AG04449 (cell line): ENCODE measurements at regions of chr2 and their contacts with region 1.

Region 1: DNA sequence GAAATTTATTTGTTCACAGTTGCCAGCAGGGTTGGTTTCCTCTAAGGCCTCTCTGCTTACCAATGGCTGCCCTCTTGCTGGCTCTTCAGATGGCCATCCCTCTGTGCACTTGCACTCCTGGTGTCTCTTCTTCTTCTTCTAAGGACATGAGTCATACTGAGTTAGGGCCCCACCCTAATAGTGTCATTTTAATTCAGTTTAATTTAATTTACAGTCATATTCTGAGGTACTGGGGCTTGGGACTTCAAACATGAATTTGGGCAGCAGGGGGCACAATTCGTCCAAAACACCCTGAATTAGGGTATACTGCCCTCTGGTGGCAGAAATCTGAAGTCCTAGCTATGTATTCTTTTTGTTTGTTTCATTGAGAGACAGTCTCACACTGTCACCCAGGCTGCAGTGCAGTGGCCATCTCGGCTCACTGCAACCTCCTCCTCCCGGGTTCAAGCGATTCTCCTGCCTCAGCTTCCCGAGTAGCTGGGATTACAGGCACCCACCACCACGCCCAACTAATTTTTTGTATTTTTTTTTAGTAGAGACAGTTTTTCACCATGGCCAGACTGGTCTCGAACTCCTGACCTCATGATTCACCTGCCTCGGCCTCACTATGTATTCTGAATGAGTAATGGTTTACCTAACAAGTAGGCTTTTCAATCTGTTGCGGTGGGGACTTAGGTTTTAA is 19.8 kb downstream of the SLC4A1AP start:
- DNase-seq: peak; percentile 36
- H3K4me3 ChIP-seq: no peak overlapping the region
- CTCF ChIP-seq: peak; percentile 71

Region 2: GRCh38 chr2:27370026-27370815 is 313.3 kb before region 1 on chr2 and contains the starts of genes EIF2B4 and SNX17:
- CTCF ChIA-PET with region 1: interaction called, 16 read pairs
- POLR2A ChIA-PET with region 1: no interaction called
- DNase-seq: peak; percentile 96
- H3K4me3 ChIP-seq: peak within 1 kb of the TSS; percentile 97
- CTCF ChIP-seq: peak; percentile 91

Region 3: DNA sequence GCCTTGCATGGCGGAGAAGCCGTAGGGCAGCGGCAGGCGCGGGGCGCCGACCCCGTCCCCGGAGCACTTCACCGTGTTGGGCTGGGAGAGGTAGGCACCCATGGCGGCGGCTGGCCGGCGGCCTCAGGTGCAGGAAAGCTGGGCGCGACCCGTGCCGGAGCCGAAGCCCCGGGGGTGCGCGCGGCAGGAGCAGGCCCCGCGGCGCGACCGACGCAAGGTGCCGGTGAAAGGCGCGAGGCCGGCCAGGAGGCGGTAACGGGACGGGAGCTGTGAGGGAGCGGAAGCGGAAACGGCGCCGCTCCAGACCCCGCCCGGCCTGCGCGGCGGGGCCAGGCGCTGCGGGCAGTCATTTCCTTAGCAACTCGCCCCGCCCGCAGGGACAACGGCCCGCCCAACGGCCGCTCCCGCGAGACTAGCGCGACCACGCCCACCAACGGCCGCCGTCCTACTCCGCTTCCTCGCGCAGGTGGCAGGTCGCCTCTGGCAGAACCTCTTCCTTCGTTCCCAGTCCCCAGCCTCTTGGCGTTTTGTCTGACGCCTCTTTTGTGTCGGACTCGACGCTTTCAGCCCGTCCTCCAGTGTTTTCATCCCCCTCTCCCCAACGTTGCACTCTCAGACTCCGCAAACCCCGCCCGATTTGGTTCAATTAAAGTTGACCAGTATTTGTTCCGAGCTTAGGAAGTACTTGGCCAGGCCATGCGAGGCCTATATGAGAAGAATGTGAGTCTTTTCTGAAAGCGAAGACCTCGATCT is 274.0 kb before region 1 on chr2 and contains the start of gene PPM1G:
- CTCF ChIA-PET with region 1: interaction called, 57 read pairs
- POLR2A ChIA-PET with region 1: no interaction called
- DNase-seq: peak; percentile 34
- H3K4me3 ChIP-seq: peak within 1 kb of the TSS; percentile 88
- CTCF ChIP-seq: no peak

Region 4: GRCh38 chr2:27647289-27647688 is 36.2 kb before region 1 on chr2:
- CTCF ChIA-PET with region 1: interaction called, 26 read pairs
- POLR2A ChIA-PET with region 1: no interaction called
- DNase-seq: peak; percentile 46
- H3K4me3 ChIP-seq: no peak overlapping the region
- CTCF ChIP-seq: no peak

Region 5: GRCh38 chr2:27672723-27673486 is 10.6 kb before region 1 on chr2:
- CTCF ChIA-PET with region 1: interaction called, 74 read pairs
- POLR2A ChIA-PET with region 1: no interaction called
- DNase-seq: no peak
- H3K4me3 ChIP-seq: no peak overlapping the region
- CTCF ChIP-seq: no peak

Region 6: DNA sequence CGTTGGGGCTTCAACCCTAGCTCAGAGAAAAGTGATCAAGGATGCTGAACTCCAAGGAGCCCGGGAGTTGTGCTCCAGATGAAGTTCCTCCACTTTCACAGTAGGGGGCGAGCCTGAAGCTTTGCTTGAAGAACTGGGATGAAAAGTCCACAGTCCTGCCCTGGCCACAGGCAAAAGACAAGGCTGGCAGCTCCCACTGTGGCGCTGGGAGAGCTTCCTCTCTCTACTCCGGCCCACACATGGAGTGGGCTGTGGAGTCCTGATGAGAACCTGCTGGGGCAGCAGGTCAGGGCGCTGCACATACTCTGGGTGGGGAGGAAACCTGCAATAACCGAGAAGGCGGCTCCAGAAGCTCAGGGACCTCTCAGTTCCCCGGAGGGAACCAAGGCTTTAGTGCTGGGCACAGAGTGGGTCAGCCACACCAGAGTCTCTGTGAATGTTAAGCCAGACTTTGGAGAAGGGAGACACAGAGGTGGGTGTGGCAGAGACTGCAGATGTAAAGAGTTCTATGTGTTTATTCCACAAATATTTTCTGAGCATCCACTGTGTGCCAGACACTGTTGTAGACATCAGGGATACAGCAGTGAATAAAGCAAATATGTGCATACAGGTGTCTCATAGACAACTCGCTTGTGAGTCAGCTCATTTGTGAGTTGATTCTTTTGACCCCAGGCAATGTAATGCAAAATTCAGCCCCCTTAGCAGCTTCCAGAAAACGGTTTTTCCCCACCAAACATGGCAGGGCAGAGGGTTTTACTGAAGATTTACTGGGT is 40.0 kb after region 1 on chr2:
- CTCF ChIA-PET with region 1: interaction called, 12 read pairs
- POLR2A ChIA-PET with region 1: no interaction called
- DNase-seq: no peak
- H3K4me3 ChIP-seq: no peak overlapping the region
- CTCF ChIP-seq: peak; percentile 83